Activated T-helper 2 cell treated with anti-CD3 and anti-CD28 coated beads, Interferon-gamma antibody, Interleukin-2, Interleukin-4, amounts not matched to agents 10 μg/mL and 5 μg/mL and 100 μg/mL, durations not matched to agents 14 hours and 24 hours and 36 hours (primary cell): ENCODE measurements at regions of chr1 and their contacts with region 1.

Region 1: GRCh38 chr1:246459221-246459620 is 47.9 kb downstream of the SMYD3 start:
- DNase-seq: no peak
- H3K4me3 Mint-ChIP-seq: no peak overlapping the region
- H3K27ac Mint-ChIP-seq: no peak overlapping the region
- H3K4me1 Mint-ChIP-seq: peaks cover 23% of the 10 kb centered on the region
- H3K27me3 Mint-ChIP-seq: peaks cover 5% of the 10 kb centered on the region

Region 2: GRCh38 chr1:246091477-246091876 is 367.7 kb before region 1 on chr1:
- intact Hi-C with region 1: no loop called
- DNase-seq: no peak
- H3K4me3 Mint-ChIP-seq: no peak overlapping the region
- H3K27ac Mint-ChIP-seq: no peak overlapping the region
- H3K4me1 Mint-ChIP-seq: peaks cover 6% of the 10 kb centered on the region
- H3K27me3 Mint-ChIP-seq: no peaks in the 10 kb centered on the region

Region 3: GRCh38 chr1:246476771-246477170 is 17.6 kb after region 1 on chr1:
- intact Hi-C with region 1: loop called (anchors 2 kb)
- DNase-seq: no peak
- H3K4me3 Mint-ChIP-seq: no peak overlapping the region
- H3K27ac Mint-ChIP-seq: peak overlapping the region; percentile 55
- H3K4me1 Mint-ChIP-seq: peaks cover 29% of the 10 kb centered on the region
- H3K27me3 Mint-ChIP-seq: no peaks in the 10 kb centered on the region